T-cell (primary cell): ENCODE measurements at regions of chr14 and their contacts with region 1.

Region 1: DNA sequence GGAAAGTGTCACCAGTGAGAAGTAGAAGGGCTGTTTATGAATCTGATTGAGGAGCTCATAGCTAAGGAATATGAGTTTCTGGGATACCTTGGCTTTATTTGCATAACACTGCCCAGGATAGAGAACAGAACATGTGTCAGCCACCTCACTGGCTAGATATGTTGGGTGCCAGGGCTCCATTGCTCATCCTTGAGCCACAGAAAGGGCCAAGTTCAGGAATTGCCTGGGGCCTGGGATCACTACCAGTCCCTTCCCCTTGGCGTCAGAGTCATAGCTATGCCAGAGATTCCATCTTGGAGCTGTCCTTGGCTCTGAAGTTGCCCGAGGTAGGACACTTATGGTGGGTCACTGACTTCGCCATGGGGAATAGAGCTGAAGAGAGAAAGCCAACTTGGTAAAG is 49.0 kb downstream of the IFT43 start:
- DNase-seq: no peak
- ATAC-seq: no peak
- H3K4me3 ChIP-seq: no peak overlapping the region
- H3K4me3 Mint-ChIP-seq: no peak overlapping the region
- H3K27ac ChIP-seq: no peak overlapping the region
- H3K27ac Mint-ChIP-seq: no peak overlapping the region
- H3K4me1 ChIP-seq: no peaks in the 10 kb centered on the region
- H3K4me1 Mint-ChIP-seq: no peaks in the 10 kb centered on the region
- H3K27me3 ChIP-seq: no peaks in the 10 kb centered on the region
- H3K27me3 Mint-ChIP-seq: no peaks in the 10 kb centered on the region

Region 2: GRCh38 chr14:75906676-75907280 is 127.8 kb before region 1 on chr14:
- CTCF ChIA-PET with region 1: no interaction called
- POLR2A ChIA-PET with region 1: no interaction called
- DNase-seq: peak in 33 of 35 experiments; percentile 11 to 81 (median 52)
- ATAC-seq: peak in 3 of 4 experiments; percentile 40 to 58 (median 51)
- H3K4me3 ChIP-seq: no peak overlapping the region
- H3K4me3 Mint-ChIP-seq: no peak overlapping the region
- H3K27ac ChIP-seq: no peak overlapping the region
- H3K27ac Mint-ChIP-seq: no peak overlapping the region
- H3K4me1 ChIP-seq: no peaks in the 10 kb centered on the region
- H3K4me1 Mint-ChIP-seq: no peaks in the 10 kb centered on the region
- H3K27me3 ChIP-seq: no peaks in the 10 kb centered on the region
- H3K27me3 Mint-ChIP-seq: no peaks in the 10 kb centered on the region

Region 3: GRCh38 chr14:76174982-76175381 is 140.4 kb after region 1 on chr14:
- CTCF ChIA-PET with region 1: interaction called in 1 of 2 experiments, 11 read pairs
- POLR2A ChIA-PET with region 1: no interaction called
- DNase-seq: no peak
- ATAC-seq: no peak
- H3K4me3 ChIP-seq: no peak overlapping the region
- H3K4me3 Mint-ChIP-seq: no peak overlapping the region
- H3K27ac ChIP-seq: no peak overlapping the region
- H3K27ac Mint-ChIP-seq: no peak overlapping the region
- H3K4me1 ChIP-seq: no peaks in the 10 kb centered on the region
- H3K4me1 Mint-ChIP-seq: peaks cover 0 to 13% (median 0%) of the 10 kb centered on the region in 3 donors
- H3K27me3 ChIP-seq: no peaks in the 10 kb centered on the region
- H3K27me3 Mint-ChIP-seq: no peaks in the 10 kb centered on the region